Activated B cell treated with CpG ODN at 0.5 μM for 24 hours (primary cell): ENCODE measurements at regions of chr10 and their contacts with region 1.

Region 1: DNA sequence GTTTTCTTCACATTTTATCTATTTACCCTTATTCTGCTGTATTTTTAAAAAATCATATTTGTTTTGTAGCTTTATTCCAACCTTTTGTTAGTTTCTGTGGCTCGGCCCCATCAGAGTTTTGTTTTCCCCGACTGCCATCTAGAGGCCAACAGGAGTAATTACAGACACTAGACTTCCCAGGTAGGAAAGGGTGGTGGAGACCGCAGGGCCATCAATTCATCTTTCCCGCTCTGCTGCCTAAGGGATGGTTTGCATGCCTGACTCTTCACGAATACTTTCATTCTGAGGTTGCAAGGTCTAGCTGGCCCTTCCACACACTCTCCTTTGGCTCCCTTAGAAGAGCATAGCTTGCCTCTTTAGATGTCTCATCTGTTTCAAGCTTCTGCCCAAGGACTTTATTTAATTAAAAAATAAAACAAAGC is 38.3 kb downstream of the LYZL2 start:
- DNase-seq: no peak
- ATAC-seq: peak; percentile 23
- H3K4me3 Mint-ChIP-seq: no peak overlapping the region
- H3K27ac Mint-ChIP-seq: no peak overlapping the region
- H3K4me1 Mint-ChIP-seq: peaks cover 37% of the 10 kb centered on the region
- H3K27me3 Mint-ChIP-seq: peaks cover 9% of the 10 kb centered on the region
- CTCF ChIP-seq: peak; percentile 62

Region 2: DNA sequence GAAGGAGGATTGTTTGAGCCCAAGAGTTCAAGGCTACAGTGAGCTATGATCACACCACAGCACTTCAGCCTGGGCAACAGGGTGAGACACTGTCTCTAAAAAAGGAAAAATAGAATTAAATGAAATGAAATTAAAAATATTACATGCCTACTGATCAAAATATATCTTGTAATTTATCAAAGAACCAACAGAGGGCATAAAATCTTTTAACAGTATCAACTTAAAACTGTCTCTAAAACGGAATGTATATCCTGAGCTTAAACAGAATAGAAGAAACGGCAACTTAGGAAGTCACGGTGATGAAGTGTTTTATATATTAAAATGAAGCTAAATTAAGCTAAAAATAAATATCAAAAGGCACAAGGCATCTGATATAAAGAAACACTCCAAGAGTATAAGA is 321.0 kb before region 1 on chr10:
- CTCF ChIA-PET with region 1: interaction called, 6 read pairs
- POLR2A ChIA-PET with region 1: no interaction called
- intact Hi-C with region 1: loop called (anchors 5 kb)
- DNase-seq: no peak
- ATAC-seq: no peak
- H3K4me3 Mint-ChIP-seq: no peak overlapping the region
- H3K27ac Mint-ChIP-seq: no peak overlapping the region
- H3K4me1 Mint-ChIP-seq: peaks cover 4% of the 10 kb centered on the region
- H3K27me3 Mint-ChIP-seq: peaks cover 11% of the 10 kb centered on the region
- CTCF ChIP-seq: no peak

Region 3: DNA sequence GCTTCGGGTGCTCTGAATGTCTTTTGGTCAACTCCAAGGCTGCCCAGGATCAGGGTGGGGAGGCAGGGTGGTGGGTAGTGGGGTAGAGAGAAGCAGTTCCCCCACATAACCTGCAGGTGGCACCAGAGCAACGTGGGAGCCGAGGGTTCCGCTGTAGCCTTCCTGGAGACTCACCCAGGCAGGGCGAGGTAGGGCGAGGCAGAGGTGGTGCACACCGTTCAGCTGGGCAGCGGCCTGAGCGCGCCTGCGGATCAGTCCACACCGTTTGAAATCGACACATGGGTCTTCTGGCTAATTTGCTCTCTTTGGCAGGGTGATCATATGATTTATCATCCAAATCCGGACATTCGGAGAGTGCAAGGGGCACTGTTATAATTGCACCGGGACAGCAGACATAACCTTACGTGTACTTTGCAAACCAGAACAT is 198.7 kb before region 1 on chr10:
- CTCF ChIA-PET with region 1: interaction called, 156 read pairs
- POLR2A ChIA-PET with region 1: interaction called, 7 read pairs
- intact Hi-C with region 1: loop called (anchors 1 kb)
- DNase-seq: peak; percentile 70
- ATAC-seq: peak; percentile 100
- H3K4me3 Mint-ChIP-seq: peak overlapping the region; percentile 20
- H3K27ac Mint-ChIP-seq: no peak overlapping the region
- H3K4me1 Mint-ChIP-seq: peaks cover 4% of the 10 kb centered on the region
- H3K27me3 Mint-ChIP-seq: peaks cover 7% of the 10 kb centered on the region
- CTCF ChIP-seq: peak; percentile 34

Region 4: DNA sequence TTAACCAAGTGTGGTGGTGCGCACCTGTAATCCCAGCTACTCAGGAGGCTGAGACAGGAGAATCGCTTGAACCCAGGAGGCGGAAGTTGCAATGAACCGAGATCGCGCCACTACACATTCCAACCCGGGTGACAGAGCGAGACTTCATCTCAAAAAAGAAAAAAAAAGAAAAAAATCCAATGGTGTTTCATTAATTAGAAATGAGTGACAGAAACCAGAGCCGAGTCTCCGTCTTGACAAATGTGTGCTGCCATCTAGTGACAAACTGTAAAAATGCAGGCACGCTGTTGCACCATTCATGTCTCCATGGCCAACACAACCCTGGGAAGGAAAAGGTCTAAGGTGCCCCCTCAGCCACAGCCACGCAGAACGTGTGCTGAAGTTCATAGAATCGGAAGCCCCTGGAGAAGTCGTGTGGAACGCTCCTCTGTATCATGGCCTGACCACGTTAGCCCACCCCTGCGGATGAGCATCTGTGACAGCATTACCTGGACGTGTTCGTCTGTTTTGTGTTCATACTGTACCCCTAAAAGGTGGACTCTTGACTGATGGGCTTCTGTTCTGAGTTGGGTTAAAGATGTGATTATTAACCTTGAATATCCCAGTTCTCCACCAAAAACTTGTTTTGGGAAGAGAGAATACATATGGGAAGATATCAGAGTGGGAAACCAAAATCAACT is 56.7 kb before region 1 on chr10:
- CTCF ChIA-PET with region 1: interaction called, 26 read pairs
- POLR2A ChIA-PET with region 1: interaction called, 3 read pairs
- intact Hi-C with region 1: loop called (anchors 1 kb)
- DNase-seq: peak; percentile 40
- ATAC-seq: peak; percentile 45
- H3K4me3 Mint-ChIP-seq: no peak overlapping the region
- H3K27ac Mint-ChIP-seq: peak overlapping the region; percentile 69
- H3K4me1 Mint-ChIP-seq: peaks cover 42% of the 10 kb centered on the region
- H3K27me3 Mint-ChIP-seq: no peaks in the 10 kb centered on the region
- CTCF ChIP-seq: peak; percentile 57

Region 5: GRCh38 chr10:31034098-31034909 is 443.0 kb after region 1 on chr10:
- CTCF ChIA-PET with region 1: no interaction called
- POLR2A ChIA-PET with region 1: no interaction called
- intact Hi-C with region 1: no loop called
- DNase-seq: no peak
- ATAC-seq: no peak
- H3K4me3 Mint-ChIP-seq: peak overlapping the region; percentile 39
- H3K27ac Mint-ChIP-seq: peak overlapping the region; percentile 41
- H3K4me1 Mint-ChIP-seq: peaks cover 21% of the 10 kb centered on the region
- H3K27me3 Mint-ChIP-seq: no peaks in the 10 kb centered on the region
- CTCF ChIP-seq: no peak